Activated naive CD4-positive, alpha-beta T cell treated with anti-CD3 and anti-CD28 coated beads for 36 hours (primary cell): ENCODE measurements at regions of chr2 and their contacts with region 1.

Region 1: DNA sequence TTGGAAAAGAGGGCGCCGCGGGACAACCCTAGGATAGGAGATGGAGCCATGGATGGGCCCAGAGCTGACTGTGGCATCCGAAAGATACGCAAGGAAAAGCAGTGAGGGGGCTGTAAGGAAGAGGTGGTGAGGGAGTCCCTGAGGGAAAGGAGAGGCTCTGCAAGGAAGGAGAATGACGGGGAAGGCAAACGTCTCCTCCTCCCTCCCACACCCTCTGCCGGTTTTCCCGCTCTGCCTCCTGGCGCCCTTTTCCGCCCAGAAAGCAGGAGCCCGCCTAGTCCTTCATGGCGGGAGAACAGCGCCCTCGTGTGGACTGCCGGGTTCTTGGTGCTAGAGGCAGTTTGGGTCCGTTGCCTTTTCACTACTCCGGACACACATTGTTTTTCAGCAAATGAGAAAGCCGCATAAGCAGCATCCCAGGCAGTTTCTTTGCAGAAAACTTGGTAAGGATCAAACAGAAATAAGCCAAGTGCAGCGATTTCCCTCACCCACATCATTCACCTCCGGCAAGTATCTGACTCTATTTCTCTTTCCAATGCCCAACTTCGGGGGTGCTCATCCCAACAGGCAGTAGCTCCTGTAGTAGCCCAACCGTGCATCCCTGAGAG is 200.4 kb downstream of the INO80D start:
- DNase-seq: peak; percentile 86
- H3K4me3 Mint-ChIP-seq: no peak overlapping the region
- H3K27ac Mint-ChIP-seq: no peak overlapping the region
- H3K4me1 Mint-ChIP-seq: no peaks in the 10 kb centered on the region
- H3K27me3 Mint-ChIP-seq: peaks cover 16% of the 10 kb centered on the region

Region 2: DNA sequence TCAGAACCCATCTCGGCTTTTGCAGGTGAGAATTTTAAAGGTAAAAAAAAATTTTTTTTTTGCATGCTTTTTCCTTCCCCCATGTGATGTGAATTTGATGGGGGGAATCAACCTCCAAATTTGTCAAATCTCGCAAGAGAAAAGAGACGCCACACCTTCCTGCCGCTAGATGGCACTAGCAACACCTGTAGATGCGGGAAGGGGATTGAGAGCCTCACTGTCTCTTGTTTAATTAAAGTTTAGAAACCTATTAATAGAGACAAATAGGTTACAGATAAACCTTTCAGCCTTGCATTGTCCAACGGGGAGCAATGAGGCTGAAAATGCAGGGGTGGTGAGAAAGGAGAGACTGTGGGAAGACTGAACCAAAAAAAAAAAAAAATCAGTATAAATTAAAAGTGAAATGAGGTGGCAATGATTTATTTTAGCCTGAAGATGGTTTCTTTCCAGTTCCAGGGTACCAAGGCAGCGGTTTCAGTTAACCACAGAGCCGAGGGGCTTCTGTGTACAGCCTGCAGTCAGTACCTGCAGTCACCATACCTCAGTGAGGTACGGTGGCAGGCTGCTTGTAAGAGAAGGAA is 118.7 kb before region 1 on chr2:
- CTCF ChIA-PET with region 1: interaction called, 4 read pairs
- intact Hi-C with region 1: loop called (anchors 1 kb)
- DNase-seq: peak; percentile 80
- H3K4me3 Mint-ChIP-seq: no peak overlapping the region
- H3K27ac Mint-ChIP-seq: no peak overlapping the region
- H3K4me1 Mint-ChIP-seq: peaks cover 12% of the 10 kb centered on the region
- H3K27me3 Mint-ChIP-seq: peaks cover 23% of the 10 kb centered on the region

Region 3: GRCh38 chr2:205776139-205776538 is 109.5 kb before region 1 on chr2:
- CTCF ChIA-PET with region 1: interaction called, 16 read pairs
- intact Hi-C with region 1: no loop called
- DNase-seq: peak; percentile 58
- H3K4me3 Mint-ChIP-seq: no peak overlapping the region
- H3K27ac Mint-ChIP-seq: no peak overlapping the region
- H3K4me1 Mint-ChIP-seq: peaks cover 7% of the 10 kb centered on the region
- H3K27me3 Mint-ChIP-seq: peaks cover 32% of the 10 kb centered on the region

Region 4: DNA sequence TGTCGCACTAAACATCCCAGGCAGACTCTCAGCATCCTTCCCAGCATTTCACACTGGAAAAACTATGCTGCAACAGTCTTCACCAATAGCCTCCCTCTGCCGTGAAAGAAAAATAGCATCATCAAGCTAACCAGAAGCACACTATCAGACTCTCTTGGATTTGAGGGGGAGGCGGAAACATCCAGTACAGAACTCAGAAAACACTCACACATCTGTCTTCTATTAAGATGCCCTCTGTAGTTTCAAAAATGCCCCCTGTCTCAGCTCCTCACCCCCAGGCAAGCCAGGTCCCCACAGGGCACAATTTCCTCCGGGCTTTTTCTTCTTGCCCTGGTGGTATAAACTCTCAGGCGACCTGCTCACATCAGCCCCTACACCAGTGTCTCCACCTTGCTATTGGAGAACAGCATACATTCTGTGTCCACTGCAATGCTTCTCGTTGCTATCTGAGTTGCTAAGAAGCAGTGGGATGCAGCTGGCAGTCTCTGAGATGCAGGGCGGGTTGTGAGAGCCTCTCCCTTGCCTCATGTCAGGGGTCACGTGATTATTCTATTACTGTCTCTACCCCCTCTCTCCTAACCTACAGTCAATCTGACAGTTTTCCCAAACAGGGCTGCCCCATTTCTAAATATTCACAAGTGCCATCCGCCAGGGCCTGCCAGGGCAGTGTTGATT is 10.5 kb after region 1 on chr2:
- CTCF ChIA-PET with region 1: no interaction called
- intact Hi-C with region 1: no loop called
- DNase-seq: no peak
- H3K4me3 Mint-ChIP-seq: no peak overlapping the region
- H3K27ac Mint-ChIP-seq: no peak overlapping the region
- H3K4me1 Mint-ChIP-seq: no peaks in the 10 kb centered on the region
- H3K27me3 Mint-ChIP-seq: peaks cover 8% of the 10 kb centered on the region